PC-9 (cell line): ENCODE measurements at regions of chr11 and their contacts with region 1.

Region 1: DNA sequence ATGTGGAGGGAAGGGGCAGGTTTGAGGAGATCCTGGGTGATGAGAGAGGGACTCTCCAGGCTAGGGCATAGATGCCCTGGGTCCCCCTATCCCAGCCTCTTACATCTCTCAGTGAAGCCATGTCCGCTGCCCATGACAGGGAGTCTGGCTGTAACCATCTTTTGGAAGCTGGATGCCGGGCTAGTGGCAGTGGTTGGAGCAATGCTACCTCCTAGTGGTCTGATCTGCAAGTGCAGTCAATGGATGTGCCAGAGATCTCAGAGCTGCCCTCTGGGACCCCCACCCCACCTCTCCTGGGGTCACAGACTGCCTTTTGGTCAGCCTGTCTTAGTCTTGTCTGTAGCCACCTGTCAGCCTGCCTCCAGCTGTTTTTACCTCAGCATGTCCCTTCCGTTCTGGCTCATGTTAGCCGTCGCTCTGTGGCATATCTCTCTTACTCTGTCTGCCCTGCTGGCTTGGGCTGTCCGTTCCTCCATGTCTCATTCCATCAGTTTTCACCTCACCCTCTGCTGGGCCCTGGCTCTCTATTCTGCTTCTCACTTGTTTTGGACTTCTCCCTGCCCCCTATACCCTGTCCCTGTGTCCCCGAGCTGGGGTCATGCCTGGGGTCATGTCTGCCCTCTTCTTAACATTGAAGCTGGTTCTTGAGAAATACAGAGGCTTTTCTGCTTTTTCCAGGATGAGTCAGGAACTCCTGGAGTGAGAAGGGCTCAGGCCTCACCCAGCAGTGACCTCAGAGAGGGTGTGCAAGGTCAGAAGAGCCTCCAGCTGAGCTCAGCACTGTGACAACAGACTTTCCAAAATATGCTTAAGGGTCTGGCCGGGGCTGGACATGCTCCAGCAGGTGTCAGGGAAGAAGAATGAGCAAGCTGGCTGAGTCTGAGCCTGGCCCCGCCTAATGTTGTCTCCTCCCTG is 52.0 kb upstream of the THY1 start:
- DNase-seq: peak; percentile 64 to 75
- H3K4me3 ChIP-seq: no peak overlapping the region
- H3K27ac ChIP-seq: peak overlapping the region; percentile 34; the same call in 1 of the 2 replicates
- H3K4me1 ChIP-seq: peaks cover 19% of the 10 kb centered on the region
- H3K27me3 ChIP-seq: no peaks in the 10 kb centered on the region
- CTCF ChIP-seq: peak; percentile 98

Region 2: GRCh38 chr11:119356349-119357031 is 118.4 kb before region 1 on chr11:
- CTCF ChIA-PET with region 1: interaction called, 19 read pairs
- POLR2A ChIA-PET with region 1: no interaction called
- intact Hi-C with region 1: loop called (anchors 1 kb)
- DNase-seq: peak; percentile 61 to 65
- H3K4me3 ChIP-seq: peak overlapping the region; percentile 71
- H3K27ac ChIP-seq: no peak overlapping the region
- H3K4me1 ChIP-seq: peaks cover 20% of the 10 kb centered on the region
- H3K27me3 ChIP-seq: no peaks in the 10 kb centered on the region
- CTCF ChIP-seq: peak; percentile 100

Region 3: DNA sequence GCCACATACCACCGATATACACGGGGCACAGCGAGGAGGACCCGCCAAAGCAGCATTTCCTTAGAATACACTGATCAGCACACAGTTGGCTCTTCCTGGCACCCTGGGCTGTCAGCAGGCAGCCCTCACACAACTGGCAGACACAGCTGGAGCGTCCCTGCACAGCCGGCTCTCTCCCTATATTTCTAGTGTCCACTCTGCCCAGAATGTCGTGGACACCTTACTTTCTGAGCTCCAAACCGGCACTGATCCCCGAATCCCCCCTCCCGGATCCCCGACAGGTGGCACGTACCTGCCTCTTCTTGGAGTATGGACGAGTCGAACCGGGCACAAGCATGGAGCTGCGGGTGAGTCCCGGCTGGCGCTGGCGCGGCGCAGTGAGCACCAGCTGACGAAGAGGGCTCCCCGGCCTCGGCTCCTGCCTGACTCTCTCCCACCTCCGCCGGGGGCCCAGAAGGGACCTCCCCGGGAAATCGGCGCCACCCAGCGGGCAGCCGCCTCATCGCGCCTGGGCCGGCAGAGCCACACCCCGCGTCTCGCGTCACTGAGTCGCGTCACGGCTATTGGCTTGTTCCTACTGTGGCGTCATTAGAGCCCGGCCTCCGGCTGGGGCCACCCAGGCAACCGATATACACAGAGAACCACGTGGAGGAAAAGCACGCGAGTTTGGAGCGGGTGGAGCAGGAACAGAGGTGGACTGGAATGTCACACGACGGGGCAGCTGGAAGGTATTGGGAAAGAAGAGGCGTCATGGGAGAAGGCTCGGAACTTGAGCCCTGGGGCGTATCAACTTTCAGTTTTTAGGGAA is 93.6 kb before region 1 on chr11 and contains the start of gene USP2:
- CTCF ChIA-PET with region 1: interaction called, 4 read pairs
- POLR2A ChIA-PET with region 1: no interaction called
- intact Hi-C with region 1: loop called (anchors 1 kb)
- DNase-seq: peak; percentile 97 to 98
- H3K4me3 ChIP-seq: peak within 1 kb of the TSS; percentile 56
- H3K27ac ChIP-seq: no peak within 1 kb of the TSS
- H3K4me1 ChIP-seq: peaks cover 37% of the 10 kb centered on the region
- H3K27me3 ChIP-seq: no peaks in the 10 kb centered on the region
- CTCF ChIP-seq: peak; percentile 94
- total RNA-seq, gene USP2: 2.1 and 2.7 TPM in 2 replicates

Region 4: DNA sequence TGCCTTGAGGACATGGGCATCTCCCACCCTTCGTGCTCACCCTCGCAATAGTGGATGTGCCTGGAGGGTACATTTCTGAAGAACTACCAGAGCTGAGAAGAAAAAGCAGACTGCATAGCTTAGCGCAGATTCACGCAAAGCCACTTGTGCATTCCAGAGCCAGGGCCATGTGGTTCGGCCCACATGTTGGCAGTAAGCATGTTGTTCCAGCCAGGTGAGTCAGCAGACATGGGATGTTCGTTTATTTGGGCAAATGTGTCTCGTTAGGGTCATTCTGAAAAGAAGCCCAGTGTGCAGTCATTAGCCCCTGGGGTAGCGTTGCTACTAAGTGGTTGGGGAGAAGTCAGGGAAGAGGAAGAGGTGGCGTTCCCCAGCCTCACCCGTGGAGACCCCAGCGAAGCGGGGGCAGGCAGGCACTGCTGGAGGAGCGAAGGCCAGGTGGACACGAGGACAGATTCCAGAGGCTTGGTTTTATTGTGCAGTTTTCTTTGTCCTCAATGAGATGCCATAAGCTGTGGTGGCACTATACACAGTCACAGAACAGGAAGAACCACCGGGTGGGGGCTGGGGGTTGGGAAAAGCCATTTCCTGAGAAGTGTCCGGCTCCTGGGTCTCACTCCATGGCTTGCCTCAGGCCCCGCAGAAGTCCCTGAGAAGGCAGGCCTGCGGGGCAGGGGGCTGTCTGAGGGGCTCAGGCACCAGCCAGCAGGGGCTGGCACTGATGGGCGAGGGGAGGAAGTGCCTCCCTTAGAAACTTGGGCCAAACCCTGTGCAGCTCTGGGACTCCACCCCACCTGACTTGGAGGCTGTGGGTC is 57.0 kb before region 1 on chr11:
- CTCF ChIA-PET with region 1: no interaction called
- POLR2A ChIA-PET with region 1: no interaction called
- intact Hi-C with region 1: no loop called
- DNase-seq: peak in 1 of 2 experiments; percentile 48
- H3K4me3 ChIP-seq: no peak overlapping the region
- H3K27ac ChIP-seq: no peak overlapping the region
- H3K4me1 ChIP-seq: 0 out of 2 replicates have a peak, but pooled peaks cover 3% of the 10 kb centered on the region
- H3K27me3 ChIP-seq: no peaks in the 10 kb centered on the region
- CTCF ChIP-seq: no peak

Region 5: GRCh38 chr11:119509969-119510401 is 35.0 kb after region 1 on chr11:
- CTCF ChIA-PET with region 1: no interaction called
- POLR2A ChIA-PET with region 1: no interaction called
- intact Hi-C with region 1: no loop called
- DNase-seq: peak in 1 of 2 experiments; percentile 44
- H3K4me3 ChIP-seq: no peak overlapping the region
- H3K27ac ChIP-seq: no peak overlapping the region
- H3K4me1 ChIP-seq: no peaks in the 10 kb centered on the region
- H3K27me3 ChIP-seq: peaks cover 51% of the 10 kb centered on the region
- CTCF ChIP-seq: no peak